Gastrocnemius medialis (tissue), 4 donors: ENCODE measurements at regions of chr18 and their contacts with region 1.

Region 1: DNA sequence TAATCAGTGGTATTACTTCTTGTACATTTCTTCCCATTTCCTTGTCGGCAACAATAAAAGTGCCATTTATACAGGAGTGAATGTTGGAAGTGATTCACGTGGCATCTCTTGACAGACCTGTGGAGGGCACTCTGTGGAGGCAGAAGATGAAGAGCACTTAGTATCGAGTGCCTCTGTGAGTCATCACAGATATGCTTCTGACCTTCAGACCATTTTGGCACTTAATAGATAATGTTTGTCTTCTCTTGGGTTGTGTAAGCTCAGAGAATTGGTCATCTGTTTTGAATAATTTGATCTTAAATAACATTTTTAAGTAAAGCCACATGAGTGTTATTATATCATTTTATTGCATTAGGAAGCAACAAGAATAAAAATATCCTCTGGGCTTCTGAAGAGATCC is 305.5 kb downstream of the PTPRM start:
- DNase-seq: peak in 1 of 2 donors; percentile 37
- ATAC-seq: peak; percentile 58 to 71
- H3K4me3 ChIP-seq: no peak overlapping the region
- H3K27ac ChIP-seq: peak overlapping the region; percentile 64 to 85 (median 69)
- H3K4me1 ChIP-seq: peaks cover 34 to 40% of the 10 kb centered on the region in 2 donors
- H3K27me3 ChIP-seq: no peaks in the 10 kb centered on the region
- CTCF ChIP-seq: peak in 2 of 5 experiments; percentile 18 to 21
- POLR2A ChIP-seq: no peak

Region 2: GRCh38 chr18:7383002-7383980 is 489.3 kb before region 1 on chr18:
- in situ Hi-C with region 1: no loop called
- intact Hi-C with region 1: no loop called
- DNase-seq: no peak
- ATAC-seq: no peak
- H3K4me3 ChIP-seq: no peak overlapping the region
- H3K27ac ChIP-seq: peak overlapping the region in 2 of 4 donors; percentile 18 to 29
- H3K4me1 ChIP-seq: no peaks in the 10 kb centered on the region
- H3K27me3 ChIP-seq: peaks cover 0 to 2% (median 0%) of the 10 kb centered on the region in 3 donors
- CTCF ChIP-seq: no peak
- POLR2A ChIP-seq: no peak

Region 3: DNA sequence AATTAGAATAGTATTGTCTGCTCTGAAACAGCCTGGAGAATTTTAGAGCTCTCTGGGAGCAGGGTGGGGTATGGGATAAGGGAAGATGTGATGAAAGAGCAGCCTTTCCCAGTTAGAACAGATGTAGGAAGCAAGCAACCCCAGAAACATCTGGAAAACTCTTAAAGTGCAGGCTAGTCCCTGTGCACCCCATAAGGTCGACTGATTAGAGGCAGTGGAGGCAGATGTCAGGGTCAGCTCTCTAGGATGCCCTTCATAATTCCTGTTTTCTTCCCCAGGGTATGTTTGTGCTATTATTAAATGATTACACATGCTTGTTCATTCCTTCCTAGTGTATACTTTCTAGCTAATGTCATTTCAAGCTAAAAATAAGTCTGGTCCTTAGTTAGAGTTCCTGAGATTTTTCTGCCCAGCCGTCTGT is 263.8 kb before region 1 on chr18:
- in situ Hi-C with region 1: no loop called
- intact Hi-C with region 1: loop called (anchors 5 kb)
- DNase-seq: no peak
- ATAC-seq: peak; percentile 71 to 79
- H3K4me3 ChIP-seq: no peak overlapping the region
- H3K27ac ChIP-seq: peak overlapping the region; percentile 75 to 88 (median 82)
- H3K4me1 ChIP-seq: peaks cover 68 to 81% of the 10 kb centered on the region in 2 donors
- H3K27me3 ChIP-seq: no peaks in the 10 kb centered on the region
- CTCF ChIP-seq: no peak
- POLR2A ChIP-seq: no peak

Region 4: GRCh38 chr18:7812431-7813063 is 60.0 kb before region 1 on chr18:
- in situ Hi-C with region 1: no loop called
- intact Hi-C with region 1: loop called (anchors 2 kb)
- DNase-seq: no peak
- ATAC-seq: peak; percentile 72 to 77
- H3K4me3 ChIP-seq: no peak overlapping the region
- H3K27ac ChIP-seq: peak overlapping the region; percentile 12 to 54 (median 35)
- H3K4me1 ChIP-seq: peaks cover 40 to 42% of the 10 kb centered on the region in 2 donors
- H3K27me3 ChIP-seq: no peaks in the 10 kb centered on the region
- CTCF ChIP-seq: no peak
- POLR2A ChIP-seq: no peak

Region 5: DNA sequence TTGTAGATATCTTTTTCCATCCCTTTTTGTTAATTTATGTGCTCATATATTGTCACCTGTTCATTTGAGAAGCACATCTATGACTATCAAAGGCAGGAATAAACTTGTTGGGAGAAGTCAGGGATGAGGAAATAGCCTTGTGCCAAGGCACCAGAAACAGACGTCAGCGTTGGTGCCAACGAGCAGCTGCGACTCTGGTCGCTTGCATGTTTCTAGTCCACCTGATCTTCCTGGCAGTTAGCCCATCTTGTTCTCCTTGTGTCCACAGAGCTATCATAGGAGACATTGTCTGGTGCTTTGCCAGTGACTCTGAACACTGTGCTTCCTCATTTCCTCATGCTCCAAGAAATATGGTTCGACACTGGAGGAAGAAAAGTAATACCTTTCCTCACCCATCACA is 69.0 kb after region 1 on chr18:
- in situ Hi-C with region 1: no loop called
- intact Hi-C with region 1: loop called (anchors 2 kb)
- DNase-seq: peak; percentile 94 to 95
- ATAC-seq: peak; percentile 97
- H3K4me3 ChIP-seq: no peak overlapping the region
- H3K27ac ChIP-seq: peak overlapping the region; percentile 65 to 82 (median 74)
- H3K4me1 ChIP-seq: peaks cover 17 to 24% of the 10 kb centered on the region in 2 donors
- H3K27me3 ChIP-seq: no peaks in the 10 kb centered on the region
- CTCF ChIP-seq: no peak
- POLR2A ChIP-seq: no peak

Region 6: GRCh38 chr18:8084160-8084559 is 211.6 kb after region 1 on chr18:
- in situ Hi-C with region 1: no loop called
- intact Hi-C with region 1: no loop called
- DNase-seq: peak in 1 of 2 donors; percentile 22
- ATAC-seq: peak; percentile 57 to 80
- H3K4me3 ChIP-seq: no peak overlapping the region
- H3K27ac ChIP-seq: no peak overlapping the region
- H3K4me1 ChIP-seq: peaks cover 0 to 5% of the 10 kb centered on the region in 2 donors
- H3K27me3 ChIP-seq: no peaks in the 10 kb centered on the region
- CTCF ChIP-seq: peak in 4 of 5 experiments; percentile 12 to 59 (median 45)
- POLR2A ChIP-seq: no peak

Region 7: GRCh38 chr18:8140841-8141501 is 268.4 kb after region 1 on chr18:
- in situ Hi-C with region 1: no loop called
- intact Hi-C with region 1: loop called (anchors 10 kb)
- DNase-seq: peak; percentile 83 to 85
- ATAC-seq: peak; percentile 85 to 88
- H3K4me3 ChIP-seq: peak overlapping the region in 1 of 4 donors; percentile 7
- H3K27ac ChIP-seq: peak overlapping the region; percentile 64 to 93 (median 79)
- H3K4me1 ChIP-seq: peaks cover 30 to 45% of the 10 kb centered on the region in 2 donors
- H3K27me3 ChIP-seq: no peaks in the 10 kb centered on the region
- CTCF ChIP-seq: no peak
- POLR2A ChIP-seq: peak in 1 of 2 donors; percentile 53